ENCODE measurements at regions of chr7 and their contacts with region 1.

Region 1: DNA sequence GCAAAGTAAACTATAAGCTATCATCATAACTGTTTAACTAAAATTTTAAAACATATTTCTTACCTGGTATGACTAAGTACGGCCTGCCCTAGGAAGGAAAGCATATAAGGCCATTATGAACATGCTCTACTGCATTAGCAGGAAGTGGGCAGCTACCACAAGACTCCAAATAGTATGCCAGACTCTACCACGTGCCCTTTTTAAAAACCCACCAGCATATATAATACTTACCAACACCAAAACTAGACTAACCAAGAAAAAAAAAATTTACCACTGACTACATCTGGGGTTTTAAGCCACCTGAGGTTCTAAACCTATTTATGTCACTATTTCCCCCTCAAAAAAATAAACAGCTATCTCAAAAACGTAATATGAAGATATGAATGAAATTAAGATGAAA is 30.1 kb downstream of the NUDCD3 start:
- DNase-seq: peak; percentile 74
- H3K4me3 Mint-ChIP-seq: no peak overlapping the region
- H3K27ac Mint-ChIP-seq: peak overlapping the region; percentile 94
- H3K4me1 Mint-ChIP-seq: peaks cover 72% of the 10 kb centered on the region
- H3K27me3 Mint-ChIP-seq: no peaks in the 10 kb centered on the region

Region 2: GRCh38 chr7:44057849-44058763 is 402.2 kb before region 1 on chr7:
- CTCF ChIA-PET with region 1: no interaction called
- intact Hi-C with region 1: no loop called
- DNase-seq: peak; percentile 2
- H3K4me3 Mint-ChIP-seq: no peak overlapping the region
- H3K27ac Mint-ChIP-seq: peak overlapping the region; percentile 59
- H3K4me1 Mint-ChIP-seq: peaks cover 13% of the 10 kb centered on the region
- H3K27me3 Mint-ChIP-seq: no peaks in the 10 kb centered on the region

Region 3: GRCh38 chr7:44123190-44124003 is 336.9 kb before region 1 on chr7 and contains the start of gene POLD2:
- CTCF ChIA-PET with region 1: interaction called, 3 read pairs
- intact Hi-C with region 1: loop called (anchors 10 kb)
- DNase-seq: peak; percentile 98
- H3K4me3 Mint-ChIP-seq: peak within 1 kb of the TSS; percentile 88
- H3K27ac Mint-ChIP-seq: peak within 1 kb of the TSS; percentile 74
- H3K4me1 Mint-ChIP-seq: peaks cover 43% of the 10 kb centered on the region
- H3K27me3 Mint-ChIP-seq: no peaks in the 10 kb centered on the region
- total RNA-seq, gene POLD2: 261 to 270 TPM

Region 4: GRCh38 chr7:44257618-44258422 is 202.5 kb before region 1 on chr7:
- CTCF ChIA-PET with region 1: interaction called, 3 read pairs
- intact Hi-C with region 1: loop called (anchors 1 kb)
- DNase-seq: peak; percentile 90
- H3K4me3 Mint-ChIP-seq: peak overlapping the region; percentile 17
- H3K27ac Mint-ChIP-seq: peak overlapping the region; percentile 94
- H3K4me1 Mint-ChIP-seq: peaks cover 29% of the 10 kb centered on the region
- H3K27me3 Mint-ChIP-seq: no peaks in the 10 kb centered on the region

Region 5: DNA sequence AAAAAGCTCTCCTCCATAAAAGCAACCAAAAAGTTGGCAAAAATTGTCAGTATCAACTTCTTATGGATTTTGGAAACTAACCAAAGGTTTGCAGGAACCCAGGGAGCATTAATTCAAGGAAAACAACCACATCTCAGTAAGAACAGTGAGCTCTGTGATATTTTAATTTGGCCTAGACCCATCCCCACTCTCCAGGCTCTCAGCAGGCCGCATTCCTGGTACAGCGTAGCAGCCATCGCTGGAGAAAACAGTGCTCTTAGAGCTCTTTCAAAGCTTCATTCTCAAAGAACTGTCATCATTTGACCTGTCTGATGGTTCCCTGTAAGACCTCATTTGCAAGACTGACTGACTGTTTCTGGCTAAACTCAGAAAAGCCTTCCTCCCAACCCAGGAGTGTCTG is 51.7 kb before region 1 on chr7:
- CTCF ChIA-PET with region 1: no interaction called
- intact Hi-C with region 1: no loop called
- DNase-seq: no peak
- H3K4me3 Mint-ChIP-seq: no peak overlapping the region
- H3K27ac Mint-ChIP-seq: no peak overlapping the region
- H3K4me1 Mint-ChIP-seq: peaks cover 13% of the 10 kb centered on the region
- H3K27me3 Mint-ChIP-seq: no peaks in the 10 kb centered on the region

Region 6: DNA sequence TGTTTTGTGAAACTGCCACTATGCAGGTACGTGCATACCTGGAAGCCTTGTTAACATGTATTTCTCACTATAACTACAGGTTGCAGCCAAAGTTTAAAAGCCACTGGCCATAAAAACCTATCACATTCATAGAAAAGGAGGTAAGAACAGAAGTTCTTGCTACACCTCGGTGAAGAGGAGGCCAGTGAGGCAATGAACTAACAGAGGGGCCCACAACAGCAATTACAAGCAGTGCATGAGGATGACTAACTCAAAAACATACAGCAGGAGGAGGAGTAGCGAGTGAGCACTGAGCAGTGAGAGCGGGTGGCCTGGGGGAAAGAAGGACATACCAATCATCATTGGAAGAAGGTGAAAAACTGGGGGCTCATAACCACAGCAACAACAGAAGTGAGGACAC is 21.5 kb before region 1 on chr7:
- CTCF ChIA-PET with region 1: interaction called, 4 read pairs
- intact Hi-C with region 1: loop called (anchors 1 kb)
- DNase-seq: no peak
- H3K4me3 Mint-ChIP-seq: no peak overlapping the region
- H3K27ac Mint-ChIP-seq: no peak overlapping the region
- H3K4me1 Mint-ChIP-seq: peaks cover 64% of the 10 kb centered on the region
- H3K27me3 Mint-ChIP-seq: no peaks in the 10 kb centered on the region

Region 7: GRCh38 chr7:44490351-44491200 is 30.3 kb after region 1 on chr7 and contains the start of gene NUDCD3:
- CTCF ChIA-PET with region 1: interaction called, 6 read pairs
- intact Hi-C with region 1: loop called (anchors 1 kb)
- DNase-seq: peak; percentile 89
- H3K4me3 Mint-ChIP-seq: peak within 1 kb of the TSS; percentile 85
- H3K27ac Mint-ChIP-seq: peak within 1 kb of the TSS; percentile 94
- H3K4me1 Mint-ChIP-seq: peaks cover 41% of the 10 kb centered on the region
- H3K27me3 Mint-ChIP-seq: no peaks in the 10 kb centered on the region
- total RNA-seq, gene NUDCD3: 81.1 to 81.8 TPM

Region 8: DNA sequence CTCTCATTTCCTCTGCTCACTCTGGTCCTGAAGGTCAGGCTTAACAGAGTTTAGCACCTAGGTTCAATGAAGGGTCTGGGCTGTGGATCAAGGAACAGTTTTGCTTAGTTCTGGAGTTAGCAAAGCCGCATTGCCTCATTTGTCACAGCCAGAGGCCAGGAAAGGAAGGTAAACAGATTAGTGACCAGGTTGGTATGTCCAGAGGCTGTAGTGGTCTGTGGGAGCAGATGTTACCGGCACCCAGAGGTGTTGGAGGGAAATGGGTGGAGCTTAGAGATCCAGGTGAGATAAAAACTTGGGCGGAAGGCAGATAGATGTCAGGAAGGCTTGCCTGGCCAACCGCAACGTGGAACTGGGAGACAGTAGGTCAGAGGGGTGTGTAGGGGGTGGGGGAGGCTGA is 251.7 kb after region 1 on chr7:
- CTCF ChIA-PET with region 1: no interaction called
- intact Hi-C with region 1: no loop called
- DNase-seq: no peak
- H3K4me3 Mint-ChIP-seq: no peak overlapping the region
- H3K27ac Mint-ChIP-seq: no peak overlapping the region
- H3K4me1 Mint-ChIP-seq: peaks cover 4% of the 10 kb centered on the region
- H3K27me3 Mint-ChIP-seq: no peaks in the 10 kb centered on the region

Region 9: DNA sequence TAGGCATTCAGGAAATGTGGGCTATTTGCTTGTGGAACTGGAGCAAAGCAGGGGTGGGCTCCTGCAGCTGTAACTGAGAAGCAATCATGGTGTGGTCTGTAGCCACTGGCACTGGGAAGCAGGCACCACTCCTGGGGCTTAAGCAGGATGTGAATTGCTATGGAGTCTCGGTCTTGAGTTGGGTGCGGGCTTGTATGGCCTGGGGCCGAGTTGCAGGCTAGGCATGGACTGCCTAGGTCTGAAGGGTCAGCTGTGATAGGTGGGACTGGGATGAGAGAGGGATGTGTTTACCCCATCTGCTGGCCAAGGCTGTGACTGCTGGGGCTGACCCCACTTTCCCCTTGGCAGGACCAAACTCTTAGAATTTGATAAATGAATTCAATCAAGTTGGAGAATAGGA is 1156.8 kb after region 1 on chr7:
- CTCF ChIA-PET with region 1: no interaction called
- intact Hi-C with region 1: no loop called
- DNase-seq: no peak
- H3K4me3 Mint-ChIP-seq: no peak overlapping the region
- H3K27ac Mint-ChIP-seq: no peak overlapping the region
- H3K4me1 Mint-ChIP-seq: no peaks in the 10 kb centered on the region
- H3K27me3 Mint-ChIP-seq: peaks cover 2% of the 10 kb centered on the region